ENCODE measurements at regions of chr11 and their contacts with region 1.

Region 1: GRCh38 chr11:10307442-10308207 is 2.8 kb downstream of the ADM start:
- DNase-seq: peak; percentile 84
- ATAC-seq: peak; percentile 73
- H3K4me3 Mint-ChIP-seq: peak overlapping the region; percentile 96
- H3K27ac Mint-ChIP-seq: peak overlapping the region; percentile 77
- H3K4me1 Mint-ChIP-seq: peaks cover 59% of the 10 kb centered on the region
- H3K27me3 Mint-ChIP-seq: peaks cover 46% of the 10 kb centered on the region

Region 2: DNA sequence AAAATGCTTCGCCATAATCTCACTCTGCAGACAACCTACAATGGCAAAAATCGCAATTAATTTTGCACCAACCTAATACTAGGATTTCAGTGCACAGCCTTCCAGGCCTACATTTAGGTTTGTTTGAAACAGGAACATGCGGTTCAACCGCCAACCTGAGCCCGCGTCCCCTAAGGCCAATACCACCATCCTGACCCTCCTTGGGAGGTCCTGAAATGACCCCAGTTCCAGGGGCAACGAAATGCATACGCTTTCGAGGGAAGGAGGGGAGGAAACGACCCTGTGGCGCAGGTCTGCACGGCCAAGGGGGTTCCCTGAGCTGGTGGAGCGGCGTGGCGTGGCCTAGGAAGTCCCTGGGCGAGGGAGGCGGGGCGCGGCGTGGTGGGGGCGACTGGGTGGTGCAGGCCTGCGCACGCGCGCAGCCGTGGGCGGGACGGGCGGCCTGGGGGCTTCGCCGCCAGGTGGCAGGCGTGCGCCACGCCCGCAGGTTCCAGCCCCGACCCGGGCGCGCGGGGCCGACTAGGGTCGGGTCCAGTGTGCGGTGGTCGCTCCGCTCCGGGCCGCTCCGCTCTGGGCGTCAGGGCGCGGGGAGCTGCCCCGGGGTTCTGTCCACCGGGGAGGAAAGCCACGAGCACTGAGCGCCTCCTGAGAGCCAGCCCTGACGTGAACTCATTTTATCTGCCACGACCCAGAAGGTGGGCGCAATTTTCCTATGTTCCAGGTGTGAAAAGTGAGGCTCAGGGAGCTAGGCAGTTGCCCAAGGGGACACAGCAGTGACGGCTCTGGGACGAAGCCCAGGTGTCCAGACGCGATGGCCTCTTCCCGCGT is 549.6 kb before region 1 on chr11:
- CTCF ChIA-PET with region 1: interaction called, 41 read pairs
- POLR2A ChIA-PET with region 1: no interaction called
- DNase-seq: peak; percentile 92
- ATAC-seq: peak; percentile 85
- H3K4me3 Mint-ChIP-seq: peak overlapping the region; percentile 74
- H3K27ac Mint-ChIP-seq: peak overlapping the region; percentile 79
- H3K4me1 Mint-ChIP-seq: peaks cover 40% of the 10 kb centered on the region
- H3K27me3 Mint-ChIP-seq: no peaks in the 10 kb centered on the region

Region 3: DNA sequence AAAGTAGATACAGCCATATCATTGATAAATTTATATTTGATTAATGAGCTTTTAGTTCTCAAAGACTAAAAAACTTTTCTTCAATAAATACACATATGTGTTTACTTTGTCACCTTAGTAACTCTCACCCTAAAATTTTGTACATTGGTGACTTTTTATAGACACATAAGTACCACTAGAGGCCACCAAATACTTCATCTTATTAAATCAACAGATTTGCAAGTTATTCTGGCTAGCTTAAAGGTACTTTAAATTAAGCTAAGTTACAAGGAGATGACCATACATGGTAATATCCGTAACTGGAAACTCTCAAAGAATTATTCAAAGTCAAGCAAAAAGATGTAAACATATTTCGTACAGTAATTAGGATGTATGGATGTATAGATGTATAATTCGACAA is 125.8 kb before region 1 on chr11:
- CTCF ChIA-PET with region 1: interaction called, 24 read pairs
- POLR2A ChIA-PET with region 1: no interaction called
- DNase-seq: no peak
- ATAC-seq: no peak
- H3K4me3 Mint-ChIP-seq: no peak overlapping the region
- H3K27ac Mint-ChIP-seq: no peak overlapping the region
- H3K4me1 Mint-ChIP-seq: peaks cover 3% of the 10 kb centered on the region
- H3K27me3 Mint-ChIP-seq: no peaks in the 10 kb centered on the region

Region 4: GRCh38 chr11:10192036-10192435 is 115.6 kb before region 1 on chr11:
- CTCF ChIA-PET with region 1: no interaction called
- POLR2A ChIA-PET with region 1: no interaction called
- DNase-seq: no peak
- ATAC-seq: no peak
- H3K4me3 Mint-ChIP-seq: no peak overlapping the region
- H3K27ac Mint-ChIP-seq: no peak overlapping the region
- H3K4me1 Mint-ChIP-seq: no peaks in the 10 kb centered on the region
- H3K27me3 Mint-ChIP-seq: peaks cover 2% of the 10 kb centered on the region

Region 5: DNA sequence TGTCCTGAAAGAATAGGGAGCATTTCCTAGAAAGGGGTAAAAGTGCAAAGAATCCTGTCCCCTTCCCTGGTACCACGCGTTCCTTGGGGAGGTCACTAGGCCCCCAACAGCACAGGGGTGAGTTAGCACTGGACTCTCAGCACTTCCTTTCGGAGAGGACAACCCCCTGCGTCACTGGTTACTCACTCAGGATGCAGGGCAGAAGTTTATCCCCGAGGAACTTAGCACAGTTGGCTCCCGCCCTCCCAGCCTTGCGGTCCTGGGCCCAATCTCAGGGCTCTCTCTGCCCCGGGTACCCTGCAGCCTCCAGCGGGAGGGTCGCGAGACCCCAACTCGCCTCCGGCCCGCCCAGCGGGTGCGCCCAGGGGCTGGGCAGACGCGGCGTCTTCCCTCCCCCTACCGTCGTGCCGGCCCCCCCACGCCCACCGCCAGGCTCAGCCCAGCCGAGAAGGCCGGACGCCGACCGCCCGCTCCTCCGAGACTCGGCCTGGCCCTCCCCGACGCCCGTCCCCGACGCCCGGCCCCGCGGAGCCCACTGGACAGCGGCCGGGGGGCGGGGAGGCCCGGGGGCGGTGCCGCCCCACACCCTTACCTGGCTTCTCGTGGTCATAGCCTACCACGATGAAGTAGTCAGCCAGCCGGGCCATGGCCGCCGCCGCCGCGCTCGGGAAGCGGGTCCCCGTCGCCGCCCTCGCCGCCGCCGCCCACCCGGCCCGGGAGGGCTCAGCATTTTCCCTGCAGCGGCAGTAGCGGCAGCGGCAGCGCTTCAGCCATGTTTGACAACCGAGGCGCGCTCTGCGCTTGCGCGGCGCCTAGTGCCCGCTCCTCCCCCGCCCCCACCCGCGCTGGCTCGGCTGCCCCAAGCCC is 14.0 kb before region 1 on chr11 and contains the start of gene SBF2:
- CTCF ChIA-PET with region 1: interaction called, 22 read pairs
- POLR2A ChIA-PET with region 1: interaction called, 3 read pairs
- DNase-seq: peak; percentile 80
- ATAC-seq: peak; percentile 74
- H3K4me3 Mint-ChIP-seq: peak within 1 kb of the TSS; percentile 68
- H3K27ac Mint-ChIP-seq: no peak within 1 kb of the TSS
- H3K4me1 Mint-ChIP-seq: peaks cover 25% of the 10 kb centered on the region
- H3K27me3 Mint-ChIP-seq: peaks cover 50% of the 10 kb centered on the region
- total RNA-seq, gene SBF2: 5.1 to 5.9 TPM

Region 6: DNA sequence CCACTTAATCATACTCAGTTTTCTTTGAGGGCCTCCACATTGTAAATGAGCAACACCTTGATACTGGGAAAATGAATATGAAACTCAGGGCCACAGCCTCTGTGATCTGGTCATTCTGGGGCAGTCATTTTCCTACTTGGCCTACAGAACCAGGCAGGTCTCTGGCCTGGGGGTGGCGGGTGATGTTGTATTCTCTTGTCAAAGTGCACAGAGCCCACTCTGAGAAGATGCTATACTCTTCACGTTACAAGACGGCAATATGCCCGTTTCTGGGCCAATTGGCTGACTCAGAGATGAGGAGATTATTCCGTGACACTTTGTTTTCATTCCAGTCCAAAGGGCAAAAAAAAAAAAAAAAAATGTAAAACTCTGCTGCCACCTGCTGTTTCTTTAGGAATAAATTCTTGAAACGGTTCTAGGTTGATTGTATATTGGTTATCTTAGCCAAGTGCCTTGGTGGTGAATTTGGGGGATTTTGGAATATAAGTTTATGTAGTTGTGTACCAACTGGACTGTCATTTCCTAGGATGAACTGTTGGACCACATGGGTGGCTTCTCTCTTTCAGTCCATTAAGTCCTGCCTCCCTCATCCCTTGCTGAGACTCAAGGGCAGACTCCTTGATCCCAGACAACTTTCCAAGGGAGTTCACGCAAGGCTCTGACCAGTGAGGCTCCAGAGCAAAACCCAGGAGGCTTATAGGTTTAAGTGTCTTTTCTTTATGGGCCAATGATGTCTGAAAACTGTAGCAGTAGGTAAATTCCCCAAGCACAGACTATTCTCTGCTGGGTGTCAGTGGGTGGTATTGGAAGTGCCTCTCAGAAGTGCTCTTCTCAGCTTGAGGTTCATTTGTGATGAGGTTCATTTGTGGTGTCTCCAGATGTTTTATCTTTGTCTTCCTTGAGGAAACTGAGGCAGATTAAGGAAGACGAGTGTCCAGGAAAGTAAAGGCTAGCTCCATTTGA is 15.5 kb after region 1 on chr11:
- CTCF ChIA-PET with region 1: interaction called, 30 read pairs
- POLR2A ChIA-PET with region 1: no interaction called
- DNase-seq: peak; percentile 50
- ATAC-seq: peak; percentile 71
- H3K4me3 Mint-ChIP-seq: no peak overlapping the region
- H3K27ac Mint-ChIP-seq: no peak overlapping the region
- H3K4me1 Mint-ChIP-seq: peaks cover 6% of the 10 kb centered on the region
- H3K27me3 Mint-ChIP-seq: peaks cover 8% of the 10 kb centered on the region

Region 7: DNA sequence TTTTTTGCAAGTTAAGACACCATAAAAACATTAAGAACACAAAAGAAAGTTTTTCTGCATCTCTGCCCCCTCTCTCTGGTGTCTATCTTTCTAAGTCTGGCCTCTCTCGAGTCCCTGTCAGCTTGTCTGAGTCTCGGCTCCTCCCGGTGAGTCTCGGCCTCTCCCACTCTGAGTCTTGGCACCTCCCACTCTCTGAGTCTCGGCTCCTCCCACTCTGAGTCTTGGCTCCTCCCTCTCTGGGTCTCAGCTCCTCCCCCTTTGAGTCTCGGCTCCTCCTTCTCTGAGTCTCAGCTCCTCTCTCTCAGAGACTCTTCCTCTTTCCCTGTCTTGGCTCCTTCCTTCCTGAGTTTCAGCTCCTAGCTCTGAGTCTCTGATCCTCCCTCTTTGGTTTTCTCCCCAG is 74.9 kb after region 1 on chr11:
- CTCF ChIA-PET with region 1: no interaction called
- POLR2A ChIA-PET with region 1: no interaction called
- DNase-seq: no peak
- ATAC-seq: no peak
- H3K4me3 Mint-ChIP-seq: no peak overlapping the region
- H3K27ac Mint-ChIP-seq: no peak overlapping the region
- H3K4me1 Mint-ChIP-seq: no peaks in the 10 kb centered on the region
- H3K27me3 Mint-ChIP-seq: peaks cover 8% of the 10 kb centered on the region